ENCODE measurements at regions of chr4 and their contacts with region 1.

Region 1: GRCh38 chr4:186191200-186192065 is at the start of gene CYP4V2:
- DNase-seq: peak; percentile 84
- ATAC-seq: peak; percentile 86
- H3K4me3 Mint-ChIP-seq: peak within 1 kb of the TSS; percentile 90
- H3K27ac Mint-ChIP-seq: peak within 1 kb of the TSS; percentile 88
- H3K4me1 Mint-ChIP-seq: peaks cover 26% of the 10 kb centered on the region
- H3K27me3 Mint-ChIP-seq: peaks cover 2% of the 10 kb centered on the region
- CTCF ChIP-seq: no peak
- total RNA-seq, gene CYP4V2: 7.7 and 9.5 TPM in 2 replicates

Region 2: DNA sequence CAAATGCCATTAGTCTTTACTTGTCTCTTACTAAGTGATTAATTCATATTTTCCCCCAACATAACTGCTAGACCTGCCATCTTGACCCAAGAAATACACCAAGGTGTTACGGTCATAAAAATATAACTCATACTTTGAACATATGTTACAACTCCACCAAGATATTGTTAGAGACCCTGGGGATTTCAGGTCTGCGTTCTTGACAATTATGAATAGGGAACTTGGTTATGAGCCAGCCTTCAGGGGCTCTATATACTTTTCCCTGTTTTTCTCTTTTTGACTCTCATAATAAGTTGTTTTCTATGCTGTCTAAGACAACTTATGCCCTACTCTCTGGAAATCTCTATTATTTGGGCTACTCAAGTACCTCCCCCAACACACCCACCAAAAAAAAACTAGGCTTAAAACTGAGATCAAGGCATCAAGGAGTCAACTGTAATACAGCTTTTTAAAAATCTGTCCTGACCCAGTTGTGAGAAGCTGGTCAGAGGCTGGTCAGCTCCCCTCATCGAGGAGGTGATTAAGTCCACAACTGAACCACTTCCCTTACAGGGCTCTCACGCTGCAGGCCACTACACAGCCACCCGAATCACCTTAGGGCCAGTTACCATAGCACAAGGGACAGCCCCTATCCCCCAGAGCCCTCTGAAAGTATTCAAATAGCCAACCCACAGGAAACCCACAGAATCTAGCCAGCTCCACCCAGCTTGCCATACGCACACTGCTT is 133.0 kb before region 1 on chr4:
- CTCF ChIA-PET with region 1: no interaction called
- POLR2A ChIA-PET with region 1: no interaction called
- intact Hi-C with region 1: loop called (anchors 2 kb)
- DNase-seq: peak; percentile 30
- ATAC-seq: peak; percentile 97
- H3K4me3 Mint-ChIP-seq: peak overlapping the region; percentile 25
- H3K27ac Mint-ChIP-seq: no peak overlapping the region
- H3K4me1 Mint-ChIP-seq: peaks cover 22% of the 10 kb centered on the region
- H3K27me3 Mint-ChIP-seq: peaks cover 38% of the 10 kb centered on the region
- CTCF ChIP-seq: no peak

Region 3: GRCh38 chr4:186304866-186305511 is 113.6 kb after region 1 on chr4:
- CTCF ChIA-PET with region 1: no interaction called
- POLR2A ChIA-PET with region 1: no interaction called
- intact Hi-C with region 1: no loop called
- DNase-seq: no peak
- ATAC-seq: no peak
- H3K4me3 Mint-ChIP-seq: no peak overlapping the region
- H3K27ac Mint-ChIP-seq: no peak overlapping the region
- H3K4me1 Mint-ChIP-seq: no peaks in the 10 kb centered on the region
- H3K27me3 Mint-ChIP-seq: peaks cover 5% of the 10 kb centered on the region
- CTCF ChIP-seq: no peak